Endothelial cell of umbilical vein (primary cell): ENCODE measurements at regions of chr14 and their contacts with region 1.

Region 1: GRCh38 chr14:96136352-96137005 is 68.2 kb upstream of the BDKRB2 start:
- DNase-seq: peak; percentile 85
- H3K4me3 ChIP-seq: no peak overlapping the region
- H3K27ac ChIP-seq: no peak overlapping the region
- H3K4me1 ChIP-seq: peaks cover 6% of the 10 kb centered on the region
- H3K27me3 ChIP-seq: no peaks in the 10 kb centered on the region
- CTCF ChIP-seq: no peak
- POLR2A ChIP-seq: no peak

Region 2: GRCh38 chr14:96100161-96101029 is 36.1 kb before region 1 on chr14:
- CTCF ChIA-PET with region 1: interaction called, 3 read pairs
- POLR2A ChIA-PET with region 1: no interaction called
- dilution Hi-C with region 1: no loop called
- intact Hi-C with region 1: loop called (anchors 1 kb)
- DNase-seq: peak; percentile 64
- H3K4me3 ChIP-seq: no peak overlapping the region
- H3K27ac ChIP-seq: no peak overlapping the region
- H3K4me1 ChIP-seq: no peaks in the 10 kb centered on the region
- H3K27me3 ChIP-seq: no peaks in the 10 kb centered on the region
- CTCF ChIP-seq: peak; percentile 81 to 83
- POLR2A ChIP-seq: no peak

Region 3: DNA sequence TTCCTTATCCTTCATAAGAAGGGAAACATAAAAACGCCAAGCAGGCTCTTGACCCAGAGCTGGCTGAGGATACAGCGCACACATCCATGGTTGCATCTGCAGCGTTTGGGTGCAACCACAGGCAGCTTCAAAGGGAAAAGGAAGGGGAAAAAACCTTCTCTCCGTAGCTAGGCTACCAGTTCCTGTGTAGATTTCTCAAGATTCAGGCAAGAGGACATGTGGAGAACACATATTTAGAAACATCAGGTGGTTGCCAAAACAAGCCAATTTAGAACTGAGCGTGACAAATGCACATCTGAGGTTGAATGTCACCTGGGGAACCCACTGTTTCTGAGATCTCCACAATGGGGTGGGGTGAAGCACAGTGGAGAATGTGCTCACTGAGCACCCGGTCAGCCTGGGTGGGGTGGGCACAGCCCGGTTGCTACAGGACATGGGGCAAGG is 10.1 kb before region 1 on chr14:
- CTCF ChIA-PET with region 1: interaction called, 3 read pairs
- POLR2A ChIA-PET with region 1: no interaction called
- dilution Hi-C with region 1: no loop called
- intact Hi-C with region 1: loop called (anchors 1 kb)
- DNase-seq: peak; percentile 50
- H3K4me3 ChIP-seq: no peak overlapping the region
- H3K27ac ChIP-seq: no peak overlapping the region
- H3K4me1 ChIP-seq: no peaks in the 10 kb centered on the region
- H3K27me3 ChIP-seq: no peaks in the 10 kb centered on the region
- CTCF ChIP-seq: no peak
- POLR2A ChIP-seq: no peak

Region 4: DNA sequence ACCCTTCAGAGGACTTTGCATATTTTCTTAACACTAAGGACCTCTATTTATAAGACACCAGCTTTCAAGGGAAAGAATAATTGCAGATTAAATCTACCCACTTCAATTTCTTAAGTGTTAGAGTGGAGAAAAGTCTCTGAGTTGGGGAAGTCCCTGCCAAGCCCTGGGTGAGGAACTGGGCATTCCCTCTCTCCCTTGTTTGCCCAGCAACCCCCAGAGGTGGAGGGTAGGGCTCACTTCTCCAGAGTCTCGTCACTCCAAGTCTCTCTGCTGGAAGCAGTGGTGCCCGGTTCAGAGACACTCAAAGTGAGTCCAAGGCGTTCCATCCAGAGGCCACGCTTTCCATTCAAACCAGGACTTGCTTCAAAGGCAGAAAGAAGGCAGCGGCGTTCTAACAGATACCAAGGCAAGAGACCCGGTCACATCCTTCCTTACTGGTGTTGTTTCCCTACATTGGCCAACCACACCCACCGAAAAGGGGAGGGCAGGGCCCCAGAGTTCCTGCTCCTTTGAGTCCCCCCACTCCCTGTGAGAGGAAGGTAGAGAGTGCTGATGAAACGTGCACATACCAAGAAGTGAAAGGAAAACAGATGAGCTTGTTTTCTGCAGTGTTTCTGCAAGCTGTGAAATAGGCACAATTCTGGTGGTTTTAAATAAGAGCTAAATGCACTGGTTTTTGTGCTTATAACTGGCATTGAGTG is 62.1 kb after region 1 on chr14:
- CTCF ChIA-PET with region 1: no interaction called
- POLR2A ChIA-PET with region 1: no interaction called
- dilution Hi-C with region 1: no loop called
- intact Hi-C with region 1: loop called (anchors 1 kb)
- DNase-seq: peak; percentile 11
- H3K4me3 ChIP-seq: no peak overlapping the region
- H3K27ac ChIP-seq: no peak overlapping the region
- H3K4me1 ChIP-seq: peaks cover 4% of the 10 kb centered on the region
- H3K27me3 ChIP-seq: no peaks in the 10 kb centered on the region
- CTCF ChIP-seq: no peak
- POLR2A ChIP-seq: no peak

Region 5: DNA sequence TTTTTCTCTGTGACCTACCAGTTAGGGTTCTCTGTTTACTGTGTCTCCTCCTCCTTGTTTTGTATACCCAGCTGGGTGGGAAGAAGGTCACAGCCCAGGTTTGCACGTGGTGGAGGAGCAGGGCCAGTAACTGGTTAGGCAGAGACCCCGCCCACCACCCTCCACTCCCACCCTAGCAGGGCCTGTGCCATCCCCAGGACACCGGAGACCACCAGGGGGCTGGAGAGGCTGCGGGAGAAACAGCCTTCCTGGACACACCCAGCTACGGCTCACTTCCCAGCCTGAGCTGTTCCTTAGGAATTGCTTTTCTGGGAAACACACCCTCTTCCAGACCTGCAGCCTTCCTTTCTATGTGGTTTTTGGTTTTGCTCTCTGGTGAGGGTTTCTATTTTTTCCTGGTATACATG is 89.3 kb after region 1 on chr14:
- CTCF ChIA-PET with region 1: no interaction called
- POLR2A ChIA-PET with region 1: no interaction called
- dilution Hi-C with region 1: no loop called
- intact Hi-C with region 1: no loop called
- DNase-seq: no peak
- H3K4me3 ChIP-seq: no peak overlapping the region
- H3K27ac ChIP-seq: no peak overlapping the region
- H3K4me1 ChIP-seq: no peaks in the 10 kb centered on the region
- H3K27me3 ChIP-seq: no peaks in the 10 kb centered on the region
- CTCF ChIP-seq: no peak
- POLR2A ChIP-seq: no peak

Region 6: GRCh38 chr14:96400495-96400894 is 264.0 kb after region 1 on chr14:
- CTCF ChIA-PET with region 1: no interaction called
- POLR2A ChIA-PET with region 1: no interaction called
- dilution Hi-C with region 1: no loop called
- intact Hi-C with region 1: no loop called
- DNase-seq: no peak
- H3K4me3 ChIP-seq: no peak overlapping the region
- H3K27ac ChIP-seq: no peak overlapping the region
- H3K4me1 ChIP-seq: no peaks in the 10 kb centered on the region
- H3K27me3 ChIP-seq: peaks cover 2% of the 10 kb centered on the region in 2 experiments
- CTCF ChIP-seq: no peak
- POLR2A ChIP-seq: no peak

Region 7: DNA sequence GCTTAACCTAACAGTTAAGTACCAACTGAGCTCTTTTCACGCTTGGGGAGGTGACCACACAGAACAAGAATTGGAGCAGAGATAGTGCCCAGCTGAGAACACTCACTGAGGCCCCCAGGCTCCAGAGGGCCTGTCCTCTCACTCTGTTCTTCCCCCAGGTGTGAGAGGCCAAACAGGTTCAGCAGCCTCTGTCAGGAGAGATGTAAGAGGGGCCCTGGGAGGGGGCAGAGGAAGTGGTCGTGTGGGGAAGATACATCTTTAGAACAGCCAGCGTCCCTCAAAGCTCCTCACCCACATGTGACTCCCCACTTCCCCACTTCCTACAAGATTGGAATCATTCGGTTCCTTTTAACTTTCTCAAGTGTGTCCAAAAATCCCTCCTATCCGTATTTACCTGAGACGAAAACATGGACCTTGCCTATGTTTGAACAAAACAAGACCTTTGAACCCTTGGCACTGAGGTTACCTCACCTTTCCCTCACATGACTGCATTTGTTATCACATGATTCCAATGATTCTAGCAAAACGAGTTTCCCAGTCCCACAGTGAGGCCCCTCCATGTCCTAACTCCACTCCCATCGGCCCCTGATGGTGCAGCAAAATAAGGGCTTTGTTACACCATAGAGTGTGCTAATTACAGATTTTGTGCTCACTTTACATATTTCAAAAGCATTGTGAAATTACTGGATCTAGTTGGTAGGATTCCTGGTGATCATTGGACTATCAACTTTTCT is 325.6 kb after region 1 on chr14:
- CTCF ChIA-PET with region 1: no interaction called
- POLR2A ChIA-PET with region 1: no interaction called
- dilution Hi-C with region 1: no loop called
- intact Hi-C with region 1: no loop called
- DNase-seq: no peak
- H3K4me3 ChIP-seq: no peak overlapping the region
- H3K27ac ChIP-seq: no peak overlapping the region
- H3K4me1 ChIP-seq: no peaks in the 10 kb centered on the region
- H3K27me3 ChIP-seq: no peaks in the 10 kb centered on the region
- CTCF ChIP-seq: no peak
- POLR2A ChIP-seq: no peak